ENCODE measurements at regions of chr6 and their contacts with region 1.

Region 1: DNA sequence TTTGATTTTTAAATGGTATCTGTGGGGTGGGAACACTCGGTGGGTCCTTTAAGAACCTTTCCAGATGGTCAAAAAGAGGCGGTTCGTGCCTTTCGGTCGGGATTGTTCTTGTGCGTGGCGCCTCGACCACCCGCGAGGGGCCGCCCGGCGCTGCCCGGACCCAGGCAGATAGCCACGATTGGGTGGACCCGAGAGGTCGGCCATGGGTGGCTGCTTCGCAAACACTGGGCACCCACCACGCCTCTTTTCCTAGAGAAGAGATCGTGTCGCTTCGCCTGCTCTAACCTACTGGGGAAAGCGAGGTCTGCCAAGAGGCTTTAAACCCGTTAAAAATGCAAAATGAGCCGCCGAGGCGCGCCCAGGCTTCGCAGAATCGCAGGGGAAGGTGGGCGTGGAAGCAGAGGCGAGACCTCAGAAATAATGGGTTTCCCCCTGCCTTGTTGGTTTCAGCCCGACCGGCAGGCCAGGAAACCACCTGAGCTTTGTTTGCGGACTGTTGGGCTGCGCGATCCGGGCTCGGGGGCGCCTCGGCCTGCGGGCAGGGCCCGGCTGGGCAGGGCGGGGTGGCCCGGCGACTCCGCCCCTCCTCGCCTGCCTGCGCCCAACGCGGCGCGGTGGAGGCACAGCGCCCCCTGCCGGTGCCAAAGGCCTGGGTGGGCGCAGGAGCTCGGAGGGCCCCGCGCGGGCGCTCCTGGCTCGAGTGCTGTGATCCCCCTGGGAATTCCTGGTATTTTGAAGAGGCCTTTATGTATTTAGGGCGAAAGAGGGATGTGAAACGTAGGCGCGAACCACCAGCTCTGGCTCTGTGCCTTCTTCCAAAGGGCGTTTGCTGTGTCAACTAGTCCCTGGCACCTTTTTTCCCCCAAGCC is 1.6 kb downstream of the MARCKS start:
- DNase-seq: peak; percentile 32 to 86
- H3K4me3 ChIP-seq: peak overlapping the region; percentile 58 to 70
- H3K27ac ChIP-seq: peak overlapping the region; percentile 86 to 89
- H3K4me1 ChIP-seq: peaks cover 0 to 5% of the 10 kb centered on the region in 2 donors
- H3K27me3 ChIP-seq: no peaks in the 10 kb centered on the region
- CTCF ChIP-seq: peak; percentile 75 to 98 (median 84)

Region 2: DNA sequence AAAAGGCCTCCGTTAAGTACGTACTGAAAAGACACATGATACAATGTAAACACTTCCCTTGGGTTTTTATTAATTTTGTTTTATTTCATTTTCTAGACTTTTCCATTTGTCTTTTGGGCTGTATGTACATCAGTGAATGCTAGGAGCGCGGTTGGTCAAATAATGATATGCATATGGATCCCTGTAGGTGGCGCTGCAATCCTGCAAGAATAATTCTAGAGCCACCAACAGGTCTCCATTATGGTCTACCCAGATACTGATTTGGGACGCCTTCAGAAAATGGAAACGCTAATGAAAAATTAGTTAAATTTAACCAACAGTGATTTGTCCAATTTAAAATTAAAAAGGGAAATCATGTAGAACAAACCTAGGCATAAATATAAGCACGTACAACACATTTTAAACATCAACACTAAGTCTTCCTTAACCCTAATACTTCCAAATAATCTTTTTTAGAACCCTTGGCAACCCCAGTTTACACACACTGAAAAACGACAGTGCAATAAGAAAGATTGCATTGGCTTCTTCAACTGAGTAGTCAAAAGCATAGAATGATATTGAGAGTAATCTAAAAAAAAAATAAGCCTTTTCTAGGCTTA is 1078.1 kb before region 1 on chr6:
- intact Hi-C with region 1: loop called (anchors 1 kb)
- DNase-seq: peak in 1 of 2 donors; percentile 74
- H3K4me3 ChIP-seq: no peak overlapping the region
- H3K27ac ChIP-seq: no peak overlapping the region
- H3K4me1 ChIP-seq: no peaks in the 10 kb centered on the region
- H3K27me3 ChIP-seq: no peaks in the 10 kb centered on the region
- CTCF ChIP-seq: peak; percentile 57 to 73 (median 69)

Region 3: DNA sequence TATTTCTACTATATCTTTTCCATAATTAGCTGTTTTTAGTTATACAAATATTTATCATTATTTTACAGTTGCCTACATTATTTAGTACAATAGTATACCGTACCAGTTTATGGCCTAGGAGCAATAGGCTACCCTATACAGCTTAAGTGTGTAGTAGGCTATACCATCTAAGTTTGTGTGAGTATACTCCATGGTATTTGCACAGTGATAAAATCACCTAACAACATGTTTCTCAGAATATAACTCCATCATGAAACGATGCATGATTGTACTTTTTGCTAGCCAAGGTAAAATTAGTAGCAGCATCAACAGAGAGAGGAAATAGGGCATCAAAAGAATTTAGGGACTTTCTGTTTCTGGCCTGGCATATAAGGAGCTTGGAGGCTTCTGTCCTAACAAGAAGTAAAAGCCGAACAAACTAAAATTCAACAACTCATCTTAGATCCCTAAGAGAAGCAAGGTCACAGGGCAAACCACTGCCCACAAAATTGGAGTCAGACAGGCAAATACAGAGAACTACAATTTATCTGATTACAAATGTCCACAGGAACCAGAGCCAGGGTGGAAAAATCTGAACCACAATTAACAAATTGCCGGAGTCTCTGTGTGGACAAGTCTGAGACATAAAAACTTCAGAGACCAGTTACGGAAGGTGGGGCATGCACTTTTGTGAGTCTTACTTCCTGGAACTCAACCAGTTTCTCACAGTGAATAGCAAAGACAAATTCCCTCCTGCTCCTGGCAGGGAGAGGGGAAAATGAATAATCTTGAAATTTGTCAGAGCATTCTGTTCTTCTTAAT is 840.2 kb before region 1 on chr6:
- intact Hi-C with region 1: loop called (anchors 2 kb)
- DNase-seq: peak in 1 of 2 donors; percentile 67
- H3K4me3 ChIP-seq: no peak overlapping the region
- H3K27ac ChIP-seq: peak overlapping the region; percentile 49 to 81
- H3K4me1 ChIP-seq: peaks cover 0 to 9% of the 10 kb centered on the region in 2 donors
- H3K27me3 ChIP-seq: no peaks in the 10 kb centered on the region
- CTCF ChIP-seq: no peak

Region 4: DNA sequence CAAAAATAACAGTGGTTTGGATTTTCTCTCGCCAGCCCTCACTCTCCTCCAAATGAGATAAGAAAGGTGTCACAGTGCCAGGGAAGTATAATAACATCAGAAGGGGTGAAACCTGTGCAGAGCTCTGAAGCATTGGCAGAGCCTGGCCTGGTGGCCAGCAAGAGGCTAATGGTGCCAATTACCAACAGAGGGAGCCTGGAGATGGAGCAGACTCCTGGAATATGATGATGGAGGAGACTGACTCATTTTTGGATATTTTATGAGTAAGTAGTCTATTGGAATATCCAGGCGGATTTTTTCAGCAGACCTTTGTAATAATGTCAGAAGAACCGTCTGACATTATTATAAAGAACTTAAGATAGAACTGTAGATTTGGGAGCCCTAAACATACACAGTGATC is 444.2 kb before region 1 on chr6:
- intact Hi-C with region 1: loop called (anchors 2 kb)
- DNase-seq: peak in 1 of 2 donors; percentile 65
- H3K4me3 ChIP-seq: no peak overlapping the region
- H3K27ac ChIP-seq: no peak overlapping the region
- H3K4me1 ChIP-seq: no peaks in the 10 kb centered on the region
- H3K27me3 ChIP-seq: no peaks in the 10 kb centered on the region
- CTCF ChIP-seq: peak in 2 of 3 experiments; percentile 45 to 51

Region 5: GRCh38 chr6:113654396-113654795 is 204.3 kb before region 1 on chr6:
- intact Hi-C with region 1: loop called (anchors 5 kb)
- DNase-seq: peak; percentile 88 to 96
- H3K4me3 ChIP-seq: no peak overlapping the region
- H3K27ac ChIP-seq: peak overlapping the region; percentile 16 to 35
- H3K4me1 ChIP-seq: peaks cover 0 to 3% of the 10 kb centered on the region in 2 donors
- H3K27me3 ChIP-seq: no peaks in the 10 kb centered on the region
- CTCF ChIP-seq: no peak

Region 6: GRCh38 chr6:113796038-113796437 is 62.7 kb before region 1 on chr6:
- intact Hi-C with region 1: no loop called
- DNase-seq: no peak
- H3K4me3 ChIP-seq: no peak overlapping the region
- H3K27ac ChIP-seq: no peak overlapping the region
- H3K4me1 ChIP-seq: no peaks in the 10 kb centered on the region
- H3K27me3 ChIP-seq: no peaks in the 10 kb centered on the region
- CTCF ChIP-seq: no peak

Measured in ascending aorta (tissue), 2 donors.